ENCODE measurements at regions of chr3 and their contacts with region 1.

Region 1: GRCh38 chr3:179322286-179323196 is at the start of gene ZNF639:
- DNase-seq: peak; percentile 86
- H3K4me3 Mint-ChIP-seq: peak within 1 kb of the TSS; percentile 90
- H3K27ac Mint-ChIP-seq: peak within 1 kb of the TSS; percentile 93
- H3K4me1 Mint-ChIP-seq: peaks cover 29% of the 10 kb centered on the region
- H3K27me3 Mint-ChIP-seq: no peaks in the 10 kb centered on the region
- total RNA-seq, gene ZNF639: 23.5 to 25.0 TPM

Region 2: GRCh38 chr3:179015551-179016020 is 307.0 kb before region 1 on chr3:
- CTCF ChIA-PET with region 1: interaction called, 24 read pairs
- POLR2A ChIA-PET with region 1: no interaction called
- intact Hi-C with region 1: loop called (anchors 1 kb)
- DNase-seq: peak; percentile 49
- H3K4me3 Mint-ChIP-seq: no peak overlapping the region
- H3K27ac Mint-ChIP-seq: peak overlapping the region; percentile 44
- H3K4me1 Mint-ChIP-seq: peaks cover 33% of the 10 kb centered on the region
- H3K27me3 Mint-ChIP-seq: no peaks in the 10 kb centered on the region

Region 3: GRCh38 chr3:179108086-179108485 is 214.5 kb before region 1 on chr3:
- CTCF ChIA-PET with region 1: interaction called, 11 read pairs
- POLR2A ChIA-PET with region 1: no interaction called
- intact Hi-C with region 1: no loop called
- DNase-seq: no peak
- H3K4me3 Mint-ChIP-seq: no peak overlapping the region
- H3K27ac Mint-ChIP-seq: no peak overlapping the region
- H3K4me1 Mint-ChIP-seq: peaks cover 2% of the 10 kb centered on the region
- H3K27me3 Mint-ChIP-seq: peaks cover 11% of the 10 kb centered on the region

Region 4: DNA sequence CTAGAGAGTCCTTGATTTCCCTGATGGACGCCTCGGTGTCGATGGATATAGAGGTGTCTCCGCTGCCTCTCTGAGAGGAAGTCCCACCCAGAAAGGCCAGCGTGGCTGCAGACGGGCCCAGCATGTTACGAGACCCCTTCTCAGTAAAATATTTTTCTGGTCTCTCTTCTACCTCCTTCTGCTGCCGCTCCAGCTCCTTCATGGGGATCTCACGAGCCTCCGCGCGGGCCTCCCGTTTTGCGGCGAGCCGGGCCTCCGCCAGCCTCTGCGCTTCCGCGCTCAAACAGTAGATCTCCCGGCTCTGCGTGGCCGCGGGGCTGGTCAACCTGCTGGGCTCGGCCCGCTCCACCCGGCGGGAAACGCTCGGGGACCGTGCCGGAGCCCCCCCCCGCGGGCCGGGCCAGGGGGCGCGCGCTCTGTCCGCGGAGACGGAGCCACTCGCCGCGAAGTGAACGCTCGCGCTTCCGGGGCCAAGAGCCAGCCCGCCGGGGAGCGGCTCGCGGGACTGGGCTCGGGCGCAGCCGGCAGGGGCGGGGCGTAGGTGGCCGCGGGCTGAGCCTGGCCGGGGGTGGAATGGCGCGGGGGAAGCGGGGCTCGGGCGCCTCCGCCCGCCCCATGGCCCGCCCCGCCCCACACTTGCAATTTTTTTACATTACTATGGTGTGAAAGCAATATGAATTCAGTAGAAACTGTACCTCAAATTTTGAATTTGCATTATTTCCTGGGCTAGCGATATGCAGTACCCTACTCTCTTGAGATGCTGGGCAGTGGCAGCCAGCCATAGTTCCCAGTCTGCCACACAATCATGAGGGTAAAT is 61.4 kb before region 1 on chr3:
- CTCF ChIA-PET with region 1: no interaction called
- POLR2A ChIA-PET with region 1: no interaction called
- intact Hi-C with region 1: loop called (anchors 5 kb)
- DNase-seq: peak; percentile 77
- H3K4me3 Mint-ChIP-seq: peak overlapping the region; percentile 67
- H3K27ac Mint-ChIP-seq: no peak overlapping the region
- H3K4me1 Mint-ChIP-seq: peaks cover 9% of the 10 kb centered on the region
- H3K27me3 Mint-ChIP-seq: no peaks in the 10 kb centered on the region

Region 5: GRCh38 chr3:179604321-179605078 is 282.0 kb after region 1 on chr3 and contains the starts of genes MRPL47 and NDUFB5:
- CTCF ChIA-PET with region 1: no interaction called
- POLR2A ChIA-PET with region 1: no interaction called
- intact Hi-C with region 1: loop called (anchors 1 kb)
- DNase-seq: peak; percentile 96
- H3K4me3 Mint-ChIP-seq: peak within 1 kb of the TSS; percentile 99
- H3K27ac Mint-ChIP-seq: peak within 1 kb of the TSS; percentile 98
- H3K4me1 Mint-ChIP-seq: peaks cover 40% of the 10 kb centered on the region
- H3K27me3 Mint-ChIP-seq: no peaks in the 10 kb centered on the region
- total RNA-seq, gene MRPL47: 51.4 to 54.0 TPM
- total RNA-seq, gene NDUFB5: 133 to 147 TPM

Measured in activated CD4-positive, alpha-beta memory T cell treated with anti-CD3 and anti-CD28 coated beads for 36 hours (primary cell).